K562 (cell line): ENCODE measurements at regions of chr6 and their contacts with region 1.

Region 1: DNA sequence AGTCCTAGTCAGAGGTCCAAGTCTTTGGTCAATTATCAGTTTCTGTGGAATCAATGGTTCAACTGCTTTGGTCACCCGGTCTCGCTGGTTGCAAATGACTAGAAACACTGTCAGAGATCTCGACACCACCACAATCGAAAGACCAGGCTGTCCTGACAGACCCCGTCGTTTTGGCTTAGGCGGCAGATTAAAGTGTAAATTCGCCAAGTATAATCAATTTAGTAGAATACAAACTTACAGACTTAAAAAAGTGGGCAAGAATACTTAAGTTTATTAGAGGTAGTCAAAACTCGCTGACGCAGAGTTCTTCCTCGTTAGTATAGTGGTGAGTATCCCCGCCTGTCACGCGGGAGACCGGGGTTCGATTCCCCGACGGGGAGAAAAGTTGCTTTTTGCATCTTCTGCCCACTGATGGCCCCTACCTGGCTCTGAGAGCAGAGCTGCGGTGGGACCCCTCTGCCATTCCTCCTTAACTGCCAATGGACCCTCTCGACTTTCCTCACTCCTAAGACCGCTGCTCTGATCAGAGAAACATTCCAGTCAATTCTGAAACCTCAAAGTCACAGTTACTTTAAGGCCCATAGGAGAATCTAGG is 30.6 kb upstream of the ZNF184 start:
- DNase-seq: peak; percentile 58 to 92 (median 72)
- ATAC-seq: peak; percentile 63
- H3K4me3 ChIP-seq: peak overlapping the region; percentile 55
- H3K27ac ChIP-seq: peak overlapping the region; percentile 87
- H3K4me1 ChIP-seq: peaks cover 8 to 29% of the 10 kb centered on the region in 2 experiments
- H3K27me3 ChIP-seq: no peaks in the 10 kb centered on the region
- CTCF ChIP-seq: 0 out of 6 replicates have a peak, but pooled peaks of 1 of the 3 experiments have one; percentile 1
- EP300 ChIP-seq: no peak; the same call in 1 of the 2 replicates
- POLR2A ChIP-seq: no peak
- RAD21 ChIP-seq: peak in 1 of 2 experiments; percentile 3; a peak in 1 of 4 replicates

Region 2: DNA sequence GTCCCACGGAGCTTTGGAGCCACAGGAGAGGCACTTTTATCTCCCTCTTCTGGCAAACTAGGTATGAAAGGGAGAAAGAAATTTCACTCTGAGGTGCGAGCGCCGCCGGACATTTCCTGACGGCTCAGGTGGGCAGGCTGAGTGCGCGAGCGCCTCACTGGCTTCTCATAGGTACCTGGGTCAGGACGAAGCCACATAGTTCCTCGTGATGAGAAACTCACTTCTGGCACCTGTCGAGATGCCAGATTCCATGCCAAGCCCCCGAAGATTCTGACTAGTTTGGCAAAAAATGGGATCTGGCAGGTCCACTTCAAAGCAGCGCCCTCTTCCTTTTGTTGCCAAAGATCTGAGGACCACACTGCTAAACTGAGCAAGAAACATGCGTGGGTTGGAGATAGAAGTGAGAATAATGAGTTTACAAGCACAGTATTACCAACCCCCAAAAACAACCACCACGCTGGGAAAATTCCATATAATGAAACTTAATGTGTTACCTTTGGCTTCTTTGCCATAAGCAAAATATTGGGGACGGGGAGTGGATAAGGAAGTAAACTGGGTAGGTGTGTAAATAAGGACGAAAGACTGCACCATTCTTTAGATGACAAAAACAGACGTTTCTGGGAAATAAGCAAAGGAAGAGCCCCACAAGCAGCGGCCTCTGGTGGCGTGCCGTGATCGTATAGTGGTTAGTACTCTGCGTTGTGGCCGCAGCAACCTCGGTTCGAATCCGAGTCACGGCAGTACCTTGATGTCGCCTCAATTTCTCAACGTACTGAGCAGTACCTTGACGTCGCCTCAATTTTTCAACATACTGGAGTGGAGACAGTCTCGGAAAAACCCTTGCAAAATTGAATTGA is 345.8 kb before region 1 on chr6:
- CTCF ChIA-PET with region 1: no interaction called
- POLR2A ChIA-PET with region 1: no interaction called
- in situ Hi-C with region 1: no loop called
- intact Hi-C with region 1: loop called (anchors 5 kb)
- DNase-seq: peak; percentile 63 to 93 (median 70)
- ATAC-seq: peak; percentile 87
- H3K4me3 ChIP-seq: peak overlapping the region; percentile 54
- H3K27ac ChIP-seq: peak overlapping the region; percentile 46
- H3K4me1 ChIP-seq: peaks cover 10% of the 10 kb centered on the region in 2 experiments; a peak in 3 of 5 replicates
- H3K27me3 ChIP-seq: no peaks in the 10 kb centered on the region
- CTCF ChIP-seq: peak; percentile 73 to 77 (median 75)
- EP300 ChIP-seq: peak; percentile 49
- POLR2A ChIP-seq: 0 out of 2 replicates have a peak, but pooled peaks have one; percentile 12
- RAD21 ChIP-seq: peak; percentile 71 to 76

Region 3: GRCh38 chr6:27290065-27290849 is 213.3 kb before region 1 on chr6:
- CTCF ChIA-PET with region 1: no interaction called
- POLR2A ChIA-PET with region 1: no interaction called
- in situ Hi-C with region 1: no loop called
- intact Hi-C with region 1: loop called (anchors 5 kb)
- DNase-seq: peak; percentile 68 to 95 (median 77)
- ATAC-seq: peak; percentile 71
- H3K4me3 ChIP-seq: peak overlapping the region; percentile 29
- H3K27ac ChIP-seq: peak overlapping the region; percentile 70
- H3K4me1 ChIP-seq: peaks cover 17 to 25% of the 10 kb centered on the region in 2 experiments; a peak in 3 of 5 replicates
- H3K27me3 ChIP-seq: no peaks in the 10 kb centered on the region
- CTCF ChIP-seq: no peak; a peak in 1 of 6 replicates
- EP300 ChIP-seq: peak; percentile 83
- POLR2A ChIP-seq: 0 out of 2 replicates have a peak, but pooled peaks have one; percentile 55
- RAD21 ChIP-seq: no peak

Region 4: DNA sequence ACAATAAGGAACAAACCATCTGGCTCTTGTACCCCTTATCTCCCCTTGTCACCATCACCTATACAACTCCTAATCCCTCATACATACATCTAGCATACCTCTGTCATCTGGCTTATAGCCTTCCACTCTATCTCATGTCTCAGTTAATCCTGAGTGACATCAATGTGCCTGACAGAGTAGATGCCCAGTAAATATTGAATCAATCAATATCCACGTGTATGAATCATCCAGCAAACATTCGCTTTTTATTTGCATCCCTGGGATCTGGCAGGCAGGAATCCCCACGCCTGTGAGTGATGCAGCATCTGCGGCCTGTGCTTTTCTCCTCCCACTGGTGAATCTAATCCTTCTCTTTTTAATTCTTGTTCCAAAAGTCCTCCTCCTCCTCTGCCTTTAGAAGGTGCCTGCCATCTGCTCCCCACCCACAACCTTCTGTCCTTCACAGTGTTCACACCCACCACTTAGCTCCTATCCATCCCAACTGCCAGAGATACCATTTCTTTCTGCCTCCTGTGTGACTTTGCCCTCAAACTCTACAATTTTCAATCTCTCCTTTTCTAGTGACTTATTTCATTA is 77.4 kb before region 1 on chr6:
- CTCF ChIA-PET with region 1: no interaction called
- POLR2A ChIA-PET with region 1: no interaction called
- in situ Hi-C with region 1: no loop called
- intact Hi-C with region 1: no loop called
- DNase-seq: no peak
- ATAC-seq: no peak
- H3K4me3 ChIP-seq: no peak overlapping the region
- H3K27ac ChIP-seq: no peak overlapping the region
- H3K4me1 ChIP-seq: no peaks in the 10 kb centered on the region
- H3K27me3 ChIP-seq: no peaks in the 10 kb centered on the region
- CTCF ChIP-seq: no peak
- EP300 ChIP-seq: no peak
- POLR2A ChIP-seq: no peak
- RAD21 ChIP-seq: no peak

Region 5: DNA sequence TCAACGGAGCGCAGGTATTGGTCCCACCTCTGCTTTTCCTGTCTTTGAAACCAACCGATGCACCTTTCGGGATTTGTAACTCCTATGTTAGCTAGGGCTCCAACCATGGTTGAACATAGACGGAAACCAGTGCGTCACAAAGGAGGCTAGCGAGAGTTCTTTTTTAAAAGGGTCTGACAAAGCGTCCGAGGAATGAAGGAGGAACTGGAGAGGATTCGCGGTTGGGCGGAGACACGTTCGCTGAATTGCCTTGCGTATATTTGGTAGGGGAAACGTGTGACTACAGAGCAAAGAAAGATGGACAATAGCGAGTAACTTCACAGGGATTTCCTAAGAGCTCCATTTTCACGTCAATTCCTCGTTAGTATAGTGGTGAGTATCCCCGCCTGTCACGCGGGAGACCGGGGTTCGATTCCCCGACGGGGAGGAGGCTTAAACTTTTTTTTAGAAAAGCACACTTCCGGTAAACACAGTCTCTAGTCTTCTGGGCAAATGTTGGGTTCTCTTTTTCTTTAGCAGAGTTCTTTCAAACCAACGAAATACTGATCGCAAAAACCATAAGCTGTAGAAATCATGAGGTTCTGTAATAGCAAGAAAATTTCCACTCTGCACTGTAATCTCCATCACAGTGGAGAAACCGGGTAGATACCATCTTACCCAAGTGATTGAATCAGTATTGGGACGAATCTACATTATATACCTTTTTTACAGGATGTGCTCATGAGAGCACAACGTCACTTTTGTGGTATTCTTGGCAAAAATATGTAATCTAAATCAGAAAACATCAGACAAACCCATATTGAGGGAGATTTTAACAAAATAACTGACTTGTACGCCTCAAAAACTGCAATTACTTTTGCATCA is 24.0 kb before region 1 on chr6:
- CTCF ChIA-PET with region 1: no interaction called
- POLR2A ChIA-PET with region 1: interaction called, 4 read pairs
- in situ Hi-C with region 1: no loop called
- intact Hi-C with region 1: loop called (anchors 2 kb)
- DNase-seq: peak; percentile 57 to 89 (median 66)
- ATAC-seq: peak; percentile 76
- H3K4me3 ChIP-seq: peak overlapping the region; percentile 64
- H3K27ac ChIP-seq: peak overlapping the region; percentile 85
- H3K4me1 ChIP-seq: peaks cover 4 to 8% of the 10 kb centered on the region in 2 experiments; a peak in 2 of 5 replicates
- H3K27me3 ChIP-seq: no peaks in the 10 kb centered on the region
- CTCF ChIP-seq: 0 out of 6 replicates have a peak, but pooled peaks of 1 of the 3 experiments have one; percentile 5
- EP300 ChIP-seq: peak; percentile 34
- POLR2A ChIP-seq: peak; percentile 54; the same call in 1 of the 2 replicates
- RAD21 ChIP-seq: no peak; a peak in 2 of 4 replicates

Region 6: GRCh38 chr6:27545271-27546046 is 41.9 kb after region 1 on chr6:
- CTCF ChIA-PET with region 1: no interaction called
- POLR2A ChIA-PET with region 1: interaction called, 3 read pairs
- in situ Hi-C with region 1: no loop called
- intact Hi-C with region 1: loop called (anchors 2 kb)
- DNase-seq: peak; percentile 52 to 97 (median 68)
- ATAC-seq: peak; percentile 62
- H3K4me3 ChIP-seq: peak overlapping the region; percentile 50
- H3K27ac ChIP-seq: peak overlapping the region; percentile 77
- H3K4me1 ChIP-seq: peaks cover 4 to 25% of the 10 kb centered on the region in 2 experiments; a peak in 4 of 5 replicates
- H3K27me3 ChIP-seq: no peaks in the 10 kb centered on the region
- CTCF ChIP-seq: no peak
- EP300 ChIP-seq: peak; percentile 70
- POLR2A ChIP-seq: no peak
- RAD21 ChIP-seq: peak in 1 of 2 experiments; percentile 33; a peak in 1 of 4 replicates

Region 7: GRCh38 chr6:27575594-27576361 is 72.2 kb after region 1 on chr6:
- CTCF ChIA-PET with region 1: no interaction called
- POLR2A ChIA-PET with region 1: no interaction called
- in situ Hi-C with region 1: no loop called
- intact Hi-C with region 1: no loop called
- DNase-seq: peak; percentile 47 to 85 (median 62)
- ATAC-seq: peak; percentile 85
- H3K4me3 ChIP-seq: peak overlapping the region; percentile 9; the same call in 1 of the 2 replicates
- H3K27ac ChIP-seq: 0 out of 3 replicates have a peak overlapping the region, but pooled peaks have one; percentile 7
- H3K4me1 ChIP-seq: peaks cover 3 to 9% of the 10 kb centered on the region in 2 experiments; a peak in 3 of 5 replicates
- H3K27me3 ChIP-seq: no peaks in the 10 kb centered on the region
- CTCF ChIP-seq: 0 out of 6 replicates have a peak, but pooled peaks of 1 of the 3 experiments have one; percentile 9
- EP300 ChIP-seq: peak; percentile 59; the same call in 1 of the 2 replicates
- POLR2A ChIP-seq: no peak
- RAD21 ChIP-seq: peak in 1 of 2 experiments; percentile 3; a peak in 1 of 4 replicates

Region 8: DNA sequence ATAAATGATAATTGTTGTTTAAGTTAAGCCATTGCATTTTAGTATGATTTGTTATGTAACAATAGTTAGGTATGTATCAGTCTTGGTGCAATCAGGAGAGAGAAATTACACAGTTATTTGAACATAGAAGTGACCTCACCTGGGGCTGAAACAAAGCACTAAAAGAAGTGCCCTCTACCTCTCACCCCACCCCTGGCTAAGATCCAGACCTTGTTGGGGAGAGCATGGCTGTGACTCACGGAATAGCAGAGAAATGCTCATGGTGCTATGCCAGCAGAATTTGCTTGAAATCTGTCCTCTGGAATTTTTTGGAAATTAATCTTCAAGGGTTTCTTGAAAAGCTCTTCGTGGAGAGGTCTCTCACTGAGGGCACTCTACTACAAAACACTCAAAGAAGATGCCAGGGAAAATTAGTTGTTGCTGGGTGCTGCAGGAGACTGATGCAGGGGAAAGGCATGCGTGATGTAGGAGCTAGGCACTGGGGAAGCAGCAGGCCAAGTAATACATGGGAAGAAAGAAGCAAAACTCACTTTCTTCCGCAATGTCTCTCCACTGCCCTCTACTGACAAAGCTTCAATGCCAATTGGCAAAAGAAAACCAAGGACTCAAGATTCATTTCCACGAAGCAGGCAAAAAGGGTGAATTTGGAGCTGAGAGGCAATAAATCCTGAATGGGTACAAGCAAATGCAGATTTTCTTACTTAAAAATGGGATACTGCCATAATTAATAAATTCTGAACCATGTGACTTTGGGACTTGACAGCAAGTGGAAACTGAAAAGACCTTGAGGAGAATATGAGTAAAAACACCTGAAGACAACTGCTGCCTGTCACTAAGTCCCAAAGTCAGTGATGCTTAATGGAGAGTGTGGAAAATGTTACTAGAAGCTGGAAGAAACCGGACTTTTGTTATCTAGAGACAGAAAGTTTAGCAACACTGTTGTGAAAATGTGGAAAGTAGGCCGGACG is 105.7 kb after region 1 on chr6:
- CTCF ChIA-PET with region 1: no interaction called
- POLR2A ChIA-PET with region 1: no interaction called
- in situ Hi-C with region 1: no loop called
- intact Hi-C with region 1: loop called (anchors 5 kb)
- DNase-seq: peak in 3 of 4 experiments; percentile 34 to 86 (median 56)
- ATAC-seq: peak; percentile 62
- H3K4me3 ChIP-seq: no peak overlapping the region
- H3K27ac ChIP-seq: no peak overlapping the region
- H3K4me1 ChIP-seq: peaks cover 1 to 13% of the 10 kb centered on the region in 2 experiments; a peak in 4 of 5 replicates
- H3K27me3 ChIP-seq: no peaks in the 10 kb centered on the region
- CTCF ChIP-seq: peak; percentile 80 to 95 (median 88)
- EP300 ChIP-seq: peak; percentile 30; the same call in 1 of the 2 replicates
- POLR2A ChIP-seq: no peak
- RAD21 ChIP-seq: peak; percentile 81 to 92

Region 9: DNA sequence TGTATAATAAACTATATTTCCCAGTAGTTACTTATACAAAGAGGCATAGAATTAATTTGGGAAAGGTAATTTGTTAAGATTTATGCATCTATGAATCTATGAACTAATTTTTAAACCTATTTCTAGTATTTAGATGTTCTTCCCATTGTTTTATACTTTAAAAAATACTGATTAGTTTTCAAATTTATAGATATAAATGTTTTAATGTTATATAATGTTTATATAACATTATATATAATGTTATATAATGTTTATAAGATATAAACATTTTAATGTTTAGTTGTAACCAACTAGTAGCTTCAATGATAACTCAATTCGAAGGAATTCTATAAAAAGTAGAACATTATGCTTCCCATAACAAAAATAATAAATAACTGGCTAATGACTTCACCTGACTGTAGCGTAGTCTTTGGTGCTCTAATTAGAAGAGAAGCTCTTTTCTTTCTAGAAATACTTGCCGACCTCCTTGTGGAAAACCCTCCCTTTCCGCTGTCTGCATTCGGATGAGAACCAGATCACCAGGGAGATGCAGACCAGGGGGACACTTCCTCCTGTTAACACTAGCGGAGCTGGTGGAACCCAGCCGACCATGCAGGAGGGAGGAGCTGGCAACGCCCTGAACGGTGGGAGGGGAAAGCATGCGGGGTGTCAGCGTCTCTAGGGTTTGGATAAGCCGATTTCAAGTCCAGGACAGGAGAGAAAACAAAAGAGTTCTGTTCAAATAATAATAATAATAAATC is 250.3 kb after region 1 on chr6:
- CTCF ChIA-PET with region 1: no interaction called
- POLR2A ChIA-PET with region 1: interaction called, 3 read pairs
- in situ Hi-C with region 1: no loop called
- intact Hi-C with region 1: loop called (anchors 5 kb)
- DNase-seq: peak; percentile 84 to 98 (median 89)
- ATAC-seq: peak; percentile 93
- H3K4me3 ChIP-seq: peak overlapping the region; percentile 67
- H3K27ac ChIP-seq: peak overlapping the region; percentile 44; the same call in 2 of the 3 replicates
- H3K4me1 ChIP-seq: peaks cover 14 to 16% of the 10 kb centered on the region in 2 experiments; a peak in 4 of 5 replicates
- H3K27me3 ChIP-seq: no peaks in the 10 kb centered on the region
- CTCF ChIP-seq: peak; percentile 49 to 61 (median 55)
- EP300 ChIP-seq: peak; percentile 13
- POLR2A ChIP-seq: peak; percentile 67
- RAD21 ChIP-seq: peak in 1 of 2 experiments; percentile 30; a peak in 1 of 4 replicates

Region 10: DNA sequence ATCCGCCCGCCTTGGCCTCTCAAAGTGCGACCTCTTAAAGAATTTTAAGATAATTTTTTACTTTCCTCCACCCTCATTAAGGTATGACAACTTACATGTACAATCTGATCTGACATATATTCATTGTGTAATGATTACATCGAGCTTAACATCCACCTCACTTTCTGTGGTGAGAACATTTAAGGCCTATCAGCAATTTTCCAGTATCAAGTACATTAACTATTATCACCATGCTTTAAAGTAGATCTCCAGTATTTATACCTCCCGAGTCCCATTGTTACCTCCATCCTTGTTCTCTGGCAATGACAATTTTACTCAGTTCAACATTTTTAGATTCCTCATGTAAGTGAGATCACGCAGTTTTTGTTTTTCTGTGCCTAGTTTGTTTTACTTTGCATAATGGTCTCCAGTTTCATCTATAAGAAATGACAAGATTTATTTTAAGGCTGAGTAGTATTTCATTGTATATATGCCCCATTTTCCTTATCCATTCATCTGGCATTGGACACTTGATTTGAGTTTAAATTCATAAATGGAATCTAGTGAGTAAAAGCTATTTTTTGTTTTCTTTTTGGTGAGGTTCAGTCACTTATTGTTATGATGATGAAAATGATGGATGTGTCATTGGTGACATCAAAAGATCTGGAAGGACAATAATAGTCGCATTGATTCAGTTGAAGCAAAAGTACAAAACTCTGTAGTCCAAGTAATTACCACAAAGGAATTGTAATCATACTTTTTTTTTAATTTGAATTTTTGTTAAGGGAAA is 321.7 kb after region 1 on chr6:
- CTCF ChIA-PET with region 1: no interaction called
- POLR2A ChIA-PET with region 1: no interaction called
- in situ Hi-C with region 1: no loop called
- intact Hi-C with region 1: no loop called
- DNase-seq: peak in 1 of 4 experiments; percentile 12
- ATAC-seq: no peak
- H3K4me3 ChIP-seq: peak overlapping the region; percentile 50
- H3K27ac ChIP-seq: peak overlapping the region; percentile 83
- H3K4me1 ChIP-seq: peaks cover 0 to 8% of the 10 kb centered on the region in 2 experiments; a peak in 3 of 5 replicates
- H3K27me3 ChIP-seq: no peaks in the 10 kb centered on the region
- CTCF ChIP-seq: no peak
- EP300 ChIP-seq: no peak
- POLR2A ChIP-seq: peak; percentile 38
- RAD21 ChIP-seq: no peak